ENCODE measurements at regions of chr12 and their contacts with region 1.

Region 1: GRCh38 chr12:49130151-49131050 is 794 bp downstream of the TUBA1B start:
- DNase-seq: peak; percentile 96
- ATAC-seq: peak; percentile 58
- H3K4me3 Mint-ChIP-seq: peak overlapping the region; percentile 99
- H3K27ac Mint-ChIP-seq: peak overlapping the region; percentile 97
- H3K4me1 Mint-ChIP-seq: peaks cover 44% of the 10 kb centered on the region
- H3K27me3 Mint-ChIP-seq: no peaks in the 10 kb centered on the region

Region 2: DNA sequence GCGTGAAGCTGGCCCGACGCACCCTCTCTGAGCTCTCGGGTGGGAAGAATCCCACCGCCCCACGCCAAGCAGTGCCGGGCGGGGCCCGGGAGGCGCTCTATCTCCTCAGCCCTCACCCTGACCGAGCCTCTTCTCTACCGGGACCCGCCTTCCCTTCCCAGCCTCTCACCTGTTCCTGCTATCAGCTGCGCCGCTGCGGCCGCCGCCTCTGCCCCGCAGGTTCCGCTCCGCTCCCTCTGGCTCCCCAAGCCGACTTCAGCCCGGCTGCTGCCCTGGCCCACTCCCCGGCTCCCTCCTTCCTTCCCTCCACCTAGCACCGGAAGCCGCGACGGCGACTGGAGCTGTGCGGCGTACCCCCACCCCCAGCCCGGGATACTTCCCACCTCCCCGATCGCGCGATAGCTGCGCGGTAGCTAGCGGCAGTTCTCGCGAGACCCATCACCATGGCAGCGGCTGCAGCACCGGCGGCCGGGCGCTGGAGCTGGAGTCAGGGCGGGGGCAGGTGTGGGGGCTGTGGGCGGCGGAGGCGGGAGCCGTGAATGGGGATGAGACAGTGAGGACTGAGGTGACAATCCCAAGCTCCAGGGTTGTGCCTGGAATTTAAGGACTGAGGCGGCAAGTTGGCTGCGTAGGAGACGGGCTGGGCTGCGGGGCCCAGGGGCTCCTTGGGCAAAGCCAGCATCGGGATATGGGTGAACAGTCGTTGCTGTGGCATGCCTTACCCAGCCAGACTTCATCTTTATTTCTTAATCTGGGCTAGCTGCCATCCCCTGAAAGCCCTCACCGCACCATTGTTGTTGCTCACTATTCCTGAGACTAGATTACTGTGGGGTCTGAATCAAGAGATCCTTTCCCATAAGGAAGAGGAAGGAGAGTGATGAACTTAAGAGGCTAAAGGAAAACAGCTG is 173.0 kb before region 1 on chr12 and contains the start of gene ARF3:
- CTCF ChIA-PET with region 1: no interaction called
- POLR2A ChIA-PET with region 1: interaction called, 3 read pairs
- intact Hi-C with region 1: loop called in 1 of 2 experiments (anchors 1 kb)
- DNase-seq: peak; percentile 97
- ATAC-seq: peak; percentile 99
- H3K4me3 Mint-ChIP-seq: peak within 1 kb of the TSS; percentile 92
- H3K27ac Mint-ChIP-seq: peak within 1 kb of the TSS; percentile 74
- H3K4me1 Mint-ChIP-seq: peaks cover 23% of the 10 kb centered on the region
- H3K27me3 Mint-ChIP-seq: no peaks in the 10 kb centered on the region
- total RNA-seq, gene ARF3: 84.7 to 96.1 TPM

Region 3: GRCh38 chr12:49088190-49088931 is 42.0 kb before region 1 on chr12:
- CTCF ChIA-PET with region 1: interaction called, 10 read pairs
- POLR2A ChIA-PET with region 1: interaction called, 5 read pairs
- intact Hi-C with region 1: loop called (anchors 2 kb)
- DNase-seq: peak; percentile 82
- ATAC-seq: peak; percentile 91
- H3K4me3 Mint-ChIP-seq: no peak overlapping the region
- H3K27ac Mint-ChIP-seq: no peak overlapping the region
- H3K4me1 Mint-ChIP-seq: peaks cover 35% of the 10 kb centered on the region
- H3K27me3 Mint-ChIP-seq: peaks cover 48% of the 10 kb centered on the region

Region 4: GRCh38 chr12:49232940-49233841 is 102.8 kb after region 1 on chr12:
- CTCF ChIA-PET with region 1: interaction called, 7 read pairs
- POLR2A ChIA-PET with region 1: interaction called, 17 read pairs
- intact Hi-C with region 1: loop called (anchors 1 kb)
- DNase-seq: no peak
- ATAC-seq: no peak
- H3K4me3 Mint-ChIP-seq: peak overlapping the region; percentile 76
- H3K27ac Mint-ChIP-seq: peak overlapping the region; percentile 83
- H3K4me1 Mint-ChIP-seq: peaks cover 20% of the 10 kb centered on the region
- H3K27me3 Mint-ChIP-seq: no peaks in the 10 kb centered on the region

Region 5: DNA sequence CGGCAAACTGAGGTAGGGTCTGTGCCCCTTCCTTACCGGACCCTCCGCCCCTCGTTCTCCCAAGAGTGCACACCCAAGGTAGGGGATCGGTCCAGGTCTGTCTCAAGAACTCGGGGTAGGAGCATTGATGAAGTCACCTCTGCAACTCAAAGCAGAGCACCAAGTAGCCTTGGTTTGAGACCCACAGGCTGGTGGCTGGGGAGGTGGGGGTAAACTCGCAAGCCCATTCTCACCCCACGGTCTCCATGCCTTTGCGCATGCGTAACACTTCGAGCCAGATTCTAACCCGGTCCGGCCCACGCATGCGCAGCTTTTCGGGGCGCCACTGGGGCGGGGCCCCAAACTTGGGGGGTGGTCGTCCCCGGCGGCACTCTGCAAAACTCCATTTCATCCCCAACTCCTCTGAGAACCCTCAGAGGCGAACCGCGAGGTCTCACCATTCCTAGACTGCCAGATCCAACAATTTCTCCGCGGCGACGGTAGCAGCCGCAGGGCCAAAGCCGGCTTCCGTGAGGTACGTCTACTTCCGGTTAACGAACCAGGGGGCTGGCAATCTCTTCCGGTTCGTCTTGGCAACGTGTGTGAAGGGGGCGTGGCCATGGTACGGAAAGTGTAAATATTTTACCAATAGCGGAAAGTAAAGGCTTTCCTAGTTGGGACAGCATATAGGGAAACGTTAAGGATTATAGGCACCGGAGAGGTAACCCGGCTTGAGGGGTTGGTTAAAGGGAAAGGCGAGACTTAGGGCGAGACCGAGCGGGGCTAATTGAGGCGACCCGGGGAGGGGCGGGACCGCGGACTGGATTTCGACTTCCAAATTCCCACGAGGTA is 437.4 kb after region 1 on chr12 and contains the start of gene MCRS1:
- CTCF ChIA-PET with region 1: no interaction called
- POLR2A ChIA-PET with region 1: no interaction called
- intact Hi-C with region 1: loop called in 1 of 2 experiments (anchors 2 kb)
- DNase-seq: peak; percentile 93
- ATAC-seq: peak; percentile 88
- H3K4me3 Mint-ChIP-seq: peak within 1 kb of the TSS; percentile 90
- H3K27ac Mint-ChIP-seq: peak within 1 kb of the TSS; percentile 95
- H3K4me1 Mint-ChIP-seq: peaks cover 37% of the 10 kb centered on the region
- H3K27me3 Mint-ChIP-seq: no peaks in the 10 kb centered on the region
- total RNA-seq, gene MCRS1: 48.2 to 58.2 TPM